ENCODE measurements at regions of chr13 and their contacts with region 1.

Region 1: GRCh38 chr13:46603165-46603603 is 50.2 kb downstream of the LRCH1 start:
- DNase-seq: no peak
- ATAC-seq: peak; percentile 64
- H3K4me3 Mint-ChIP-seq: no peak overlapping the region
- H3K27ac Mint-ChIP-seq: no peak overlapping the region
- H3K4me1 Mint-ChIP-seq: peaks cover 33% of the 10 kb centered on the region
- H3K27me3 Mint-ChIP-seq: no peaks in the 10 kb centered on the region
- CTCF ChIP-seq: no peak

Region 2: DNA sequence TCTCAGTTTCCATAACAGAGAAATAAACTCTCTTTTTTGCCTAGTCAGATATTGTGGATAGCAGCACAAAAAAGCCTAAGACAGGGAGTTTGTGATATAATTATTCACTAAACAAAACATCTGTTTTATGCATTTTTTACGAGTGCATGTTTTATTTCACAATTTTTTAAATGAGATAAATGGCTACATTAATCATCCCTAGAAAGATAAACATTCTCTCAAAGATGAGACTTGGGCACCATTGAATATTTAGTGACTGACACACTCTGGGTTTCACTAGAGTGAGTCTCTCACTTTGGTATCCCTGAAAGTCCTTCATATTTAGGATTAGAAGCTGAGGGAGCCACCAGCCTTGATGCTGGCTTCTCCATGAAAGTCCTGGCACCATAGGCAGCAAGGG is 124.5 kb before region 1 on chr13:
- CTCF ChIA-PET with region 1: no interaction called
- POLR2A ChIA-PET with region 1: no interaction called
- DNase-seq: no peak
- ATAC-seq: no peak
- H3K4me3 Mint-ChIP-seq: no peak overlapping the region
- H3K27ac Mint-ChIP-seq: no peak overlapping the region
- H3K4me1 Mint-ChIP-seq: no peaks in the 10 kb centered on the region
- H3K27me3 Mint-ChIP-seq: no peaks in the 10 kb centered on the region; the same call in 1 of the 2 replicates
- CTCF ChIP-seq: no peak

Region 3: DNA sequence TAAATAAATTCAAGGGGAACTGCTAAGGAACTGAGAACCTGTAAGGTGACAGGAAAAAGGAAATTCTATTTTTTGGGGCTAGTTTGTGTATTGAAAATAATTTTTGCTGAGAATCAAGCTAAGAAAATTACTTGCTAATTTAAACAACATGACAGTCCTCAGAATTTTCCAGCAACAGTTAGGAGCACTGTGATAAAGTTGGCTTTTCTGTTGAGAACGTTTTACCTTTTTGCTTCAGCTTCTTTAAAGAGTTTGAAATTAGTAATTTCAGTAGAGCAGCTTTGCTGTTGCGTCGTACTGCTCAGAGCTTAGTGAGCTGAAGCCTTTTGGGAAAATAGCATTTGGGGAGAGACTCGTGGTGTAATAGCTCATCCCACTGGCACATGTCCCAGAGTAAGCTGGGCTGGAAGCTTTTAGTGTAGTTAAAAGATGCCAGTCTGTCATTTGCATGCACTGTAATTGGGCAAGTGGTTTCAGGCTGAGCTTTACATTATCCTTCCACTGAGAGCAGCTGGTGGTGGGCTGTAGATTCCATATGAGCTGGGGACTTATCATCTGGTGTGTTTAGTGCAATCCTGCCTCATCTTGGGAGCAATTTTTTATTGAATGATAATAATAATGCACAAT is 19.6 kb after region 1 on chr13:
- CTCF ChIA-PET with region 1: interaction called, 10 read pairs
- POLR2A ChIA-PET with region 1: no interaction called
- DNase-seq: no peak
- ATAC-seq: no peak
- H3K4me3 Mint-ChIP-seq: no peak overlapping the region
- H3K27ac Mint-ChIP-seq: no peak overlapping the region
- H3K4me1 Mint-ChIP-seq: peaks cover 76% of the 10 kb centered on the region
- H3K27me3 Mint-ChIP-seq: no peaks in the 10 kb centered on the region
- CTCF ChIP-seq: no peak

Region 4: GRCh38 chr13:46817095-46817494 is 213.9 kb after region 1 on chr13:
- CTCF ChIA-PET with region 1: no interaction called
- POLR2A ChIA-PET with region 1: no interaction called
- DNase-seq: no peak
- ATAC-seq: peak; percentile 75
- H3K4me3 Mint-ChIP-seq: no peak overlapping the region
- H3K27ac Mint-ChIP-seq: no peak overlapping the region
- H3K4me1 Mint-ChIP-seq: peaks cover 12% of the 10 kb centered on the region
- H3K27me3 Mint-ChIP-seq: no peaks in the 10 kb centered on the region
- CTCF ChIP-seq: no peak

Measured in WTC11 (cell line).